Activated B cell treated with CpG ODN at 0.5 μM for 24 hours (primary cell): ENCODE measurements at regions of chr14 and their contacts with region 1.

Region 1: GRCh38 chr14:35404449-35405303 is at the start of gene NFKBIA:
- DNase-seq: peak; percentile 98
- ATAC-seq: peak; percentile 69
- H3K4me3 Mint-ChIP-seq: peak within 1 kb of the TSS; percentile 96
- H3K27ac Mint-ChIP-seq: peak within 1 kb of the TSS; percentile 96
- H3K4me1 Mint-ChIP-seq: peaks cover 54% of the 10 kb centered on the region
- H3K27me3 Mint-ChIP-seq: no peaks in the 10 kb centered on the region
- CTCF ChIP-seq: no peak
- total RNA-seq, gene NFKBIA: 480 and 515 TPM in 2 replicates

Region 2: DNA sequence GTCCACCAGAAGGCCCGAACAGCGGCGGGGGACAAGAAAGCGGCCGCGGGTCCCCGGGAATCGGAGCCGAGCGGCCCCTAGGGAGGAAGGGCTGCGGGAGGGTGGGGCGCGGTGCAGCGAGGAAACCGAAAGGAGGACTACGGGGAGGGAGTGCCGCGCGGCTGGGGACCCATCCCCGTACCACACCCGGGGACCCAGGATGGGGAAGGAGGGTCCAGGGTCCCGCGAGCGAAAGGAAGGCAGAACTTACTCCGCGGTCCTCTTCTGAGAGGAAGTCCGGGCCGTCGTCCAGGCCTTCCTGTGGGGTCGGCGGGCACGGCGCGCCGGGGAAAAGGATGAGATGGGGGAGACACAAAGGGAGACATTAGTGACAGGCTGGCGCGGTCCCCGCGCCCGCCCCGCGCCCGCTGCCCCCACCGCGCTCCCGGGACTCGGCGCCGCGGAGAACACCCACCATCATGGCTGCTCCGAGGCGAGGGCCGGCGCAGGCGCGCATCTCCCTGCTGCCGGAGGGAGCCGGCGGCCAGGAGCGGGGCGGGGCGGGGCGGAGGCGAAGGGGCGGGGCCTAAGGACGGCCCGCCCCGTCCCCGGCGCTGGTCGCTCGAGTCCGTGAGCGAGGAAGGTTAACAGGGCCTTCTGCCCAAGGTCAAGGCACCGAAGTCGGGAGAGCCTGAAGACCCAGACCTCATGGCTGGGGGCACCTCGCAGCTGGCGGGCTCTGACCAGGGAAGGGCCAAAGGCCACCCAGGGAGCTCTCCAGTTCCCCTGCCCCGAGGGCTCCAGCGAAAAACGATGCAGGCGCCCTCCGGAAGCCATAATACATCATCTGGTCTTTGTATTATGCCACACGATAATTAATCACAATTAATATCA is 774.8 kb before region 1 on chr14 and contains the start of gene SNX6:
- CTCF ChIA-PET with region 1: no interaction called
- POLR2A ChIA-PET with region 1: interaction called, 5 read pairs
- intact Hi-C with region 1: loop called (anchors 2 kb)
- DNase-seq: peak; percentile 77
- ATAC-seq: peak; percentile 98
- H3K4me3 Mint-ChIP-seq: peak within 1 kb of the TSS; percentile 97
- H3K27ac Mint-ChIP-seq: peak within 1 kb of the TSS; percentile 93
- H3K4me1 Mint-ChIP-seq: peaks cover 10% of the 10 kb centered on the region
- H3K27me3 Mint-ChIP-seq: peaks cover 3% of the 10 kb centered on the region
- CTCF ChIP-seq: no peak
- total RNA-seq, gene SNX6: 56.0 and 61.0 TPM in 2 replicates

Region 3: DNA sequence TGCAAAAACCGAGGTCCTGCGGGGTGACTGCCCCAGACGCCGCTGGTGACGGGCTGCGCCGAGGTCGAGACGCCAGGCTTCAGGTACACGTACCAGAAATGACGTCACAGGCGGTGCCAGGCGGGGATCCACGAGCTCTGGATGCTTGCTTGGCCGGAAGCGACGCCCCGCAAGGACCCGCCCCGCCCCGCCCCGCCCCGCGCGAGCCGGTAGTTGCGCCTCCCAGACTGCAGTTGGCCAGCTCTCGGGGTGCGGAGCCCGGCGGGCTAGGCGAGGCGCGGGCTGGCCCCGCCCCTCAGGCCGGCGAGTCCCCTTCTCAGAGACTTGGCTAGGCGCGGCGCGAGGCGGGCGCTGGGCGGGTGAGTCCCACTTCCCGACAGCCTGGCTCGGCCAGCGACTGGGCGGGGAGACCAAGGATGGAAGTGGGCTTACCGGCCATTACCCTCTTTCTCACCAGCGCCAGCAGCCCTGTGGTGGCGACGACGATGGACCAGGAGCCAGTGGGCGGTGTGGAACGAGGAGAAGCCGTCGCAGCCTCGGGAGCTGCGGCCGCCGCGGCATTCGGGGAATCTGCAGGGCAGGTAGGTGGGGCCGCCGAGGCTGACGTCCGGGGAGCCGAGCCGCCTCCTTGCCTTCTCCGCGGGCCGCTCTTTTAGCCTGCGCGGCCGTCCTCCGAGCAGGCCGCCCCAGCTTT is 358.5 kb before region 1 on chr14 and contains the start of gene FAM177A1:
- CTCF ChIA-PET with region 1: no interaction called
- POLR2A ChIA-PET with region 1: interaction called, 37 read pairs
- intact Hi-C with region 1: loop called (anchors 1 kb)
- DNase-seq: peak; percentile 93
- ATAC-seq: peak; percentile 94
- H3K4me3 Mint-ChIP-seq: peak within 1 kb of the TSS; percentile 96
- H3K27ac Mint-ChIP-seq: peak within 1 kb of the TSS; percentile 97
- H3K4me1 Mint-ChIP-seq: peaks cover 28% of the 10 kb centered on the region
- H3K27me3 Mint-ChIP-seq: no peaks in the 10 kb centered on the region
- CTCF ChIP-seq: no peak
- total RNA-seq, gene FAM177A1: 23.5 and 27.4 TPM in 2 replicates

Region 4: DNA sequence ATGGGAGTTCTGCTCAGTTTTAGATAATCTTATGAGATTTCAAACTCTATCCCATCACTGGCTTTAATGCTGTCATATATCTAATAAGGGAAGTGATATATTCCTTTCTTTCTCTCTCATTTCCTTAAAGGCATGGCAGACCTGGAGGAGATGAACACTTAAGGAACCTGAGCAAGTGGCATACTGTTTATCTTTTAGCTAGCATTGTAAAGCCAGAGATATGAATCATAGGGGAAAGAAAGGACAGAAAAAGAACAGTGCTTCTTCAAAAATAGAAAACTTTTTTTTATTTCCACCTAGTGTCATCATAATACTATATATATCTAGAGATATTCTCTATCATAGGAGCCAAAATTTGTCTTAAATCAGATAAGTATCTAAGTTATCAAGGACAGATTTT is 180.7 kb before region 1 on chr14:
- CTCF ChIA-PET with region 1: interaction called, 47 read pairs
- POLR2A ChIA-PET with region 1: interaction called, 24 read pairs
- intact Hi-C with region 1: loop called (anchors 1 kb)
- DNase-seq: no peak
- ATAC-seq: no peak
- H3K4me3 Mint-ChIP-seq: no peak overlapping the region
- H3K27ac Mint-ChIP-seq: no peak overlapping the region
- H3K4me1 Mint-ChIP-seq: no peaks in the 10 kb centered on the region
- H3K27me3 Mint-ChIP-seq: no peaks in the 10 kb centered on the region
- CTCF ChIP-seq: no peak

Region 5: GRCh38 chr14:35292051-35292769 is 112.5 kb before region 1 on chr14 and contains the start of gene PSMA6:
- CTCF ChIA-PET with region 1: interaction called, 7 read pairs
- POLR2A ChIA-PET with region 1: interaction called, 211 read pairs
- intact Hi-C with region 1: loop called (anchors 1 kb)
- DNase-seq: peak; percentile 93
- ATAC-seq: peak; percentile 97
- H3K4me3 Mint-ChIP-seq: peak within 1 kb of the TSS; percentile 99
- H3K27ac Mint-ChIP-seq: peak within 1 kb of the TSS; percentile 96
- H3K4me1 Mint-ChIP-seq: peaks cover 61% of the 10 kb centered on the region
- H3K27me3 Mint-ChIP-seq: no peaks in the 10 kb centered on the region
- CTCF ChIP-seq: no peak
- total RNA-seq, gene PSMA6: 163 and 180 TPM in 2 replicates

Region 6: GRCh38 chr14:35365130-35366055 is 39.3 kb before region 1 on chr14:
- CTCF ChIA-PET with region 1: interaction called, 4 read pairs
- POLR2A ChIA-PET with region 1: interaction called, 191 read pairs
- intact Hi-C with region 1: loop called (anchors 1 kb)
- DNase-seq: no peak
- ATAC-seq: peak; percentile 82
- H3K4me3 Mint-ChIP-seq: peak overlapping the region; percentile 8
- H3K27ac Mint-ChIP-seq: peak overlapping the region; percentile 59
- H3K4me1 Mint-ChIP-seq: peaks cover 41% of the 10 kb centered on the region
- H3K27me3 Mint-ChIP-seq: no peaks in the 10 kb centered on the region
- CTCF ChIP-seq: no peak

Region 7: DNA sequence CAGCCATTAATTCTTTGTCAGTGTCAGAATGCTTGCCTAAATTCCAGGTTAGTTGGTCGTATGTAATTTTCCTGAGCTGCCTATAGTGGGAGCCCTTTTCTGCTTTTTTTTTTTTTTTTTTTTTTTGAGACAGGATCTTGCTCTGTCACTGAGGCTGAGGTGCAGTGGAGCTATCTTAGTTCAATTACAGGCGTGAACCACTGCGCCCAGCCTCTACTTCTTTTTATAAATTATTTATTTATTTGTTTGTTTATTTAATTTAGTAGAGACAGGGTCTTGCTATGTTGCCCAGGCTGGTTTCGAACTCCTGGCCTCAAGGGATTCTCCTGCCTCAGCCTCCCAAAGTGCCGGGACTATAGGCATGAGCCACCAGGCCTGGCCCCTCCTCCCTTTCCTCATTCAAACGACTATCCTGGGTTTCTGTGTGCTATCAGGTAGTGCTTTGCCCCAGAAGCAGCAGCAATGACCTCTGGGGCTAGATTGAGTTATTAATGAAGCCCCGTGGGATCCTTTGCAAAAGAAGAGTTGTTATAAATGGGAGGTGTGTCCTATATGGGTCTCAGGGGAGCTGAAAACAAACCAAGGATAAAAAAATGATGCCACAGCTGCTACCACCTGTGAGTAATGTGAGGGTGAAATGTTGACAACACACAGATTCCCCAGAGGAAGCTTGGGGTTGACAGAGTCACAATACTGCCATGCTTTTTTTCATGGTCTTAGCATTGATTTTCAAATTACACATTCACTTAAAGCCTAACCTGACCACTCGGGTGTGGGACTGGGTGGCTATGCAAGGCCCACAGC is 34.4 kb after region 1 on chr14:
- CTCF ChIA-PET with region 1: no interaction called
- POLR2A ChIA-PET with region 1: interaction called, 13 read pairs
- intact Hi-C with region 1: no loop called
- DNase-seq: no peak
- ATAC-seq: peak; percentile 93
- H3K4me3 Mint-ChIP-seq: no peak overlapping the region
- H3K27ac Mint-ChIP-seq: no peak overlapping the region
- H3K4me1 Mint-ChIP-seq: peaks cover 10% of the 10 kb centered on the region
- H3K27me3 Mint-ChIP-seq: peaks cover 3% of the 10 kb centered on the region
- CTCF ChIP-seq: no peak

Region 8: DNA sequence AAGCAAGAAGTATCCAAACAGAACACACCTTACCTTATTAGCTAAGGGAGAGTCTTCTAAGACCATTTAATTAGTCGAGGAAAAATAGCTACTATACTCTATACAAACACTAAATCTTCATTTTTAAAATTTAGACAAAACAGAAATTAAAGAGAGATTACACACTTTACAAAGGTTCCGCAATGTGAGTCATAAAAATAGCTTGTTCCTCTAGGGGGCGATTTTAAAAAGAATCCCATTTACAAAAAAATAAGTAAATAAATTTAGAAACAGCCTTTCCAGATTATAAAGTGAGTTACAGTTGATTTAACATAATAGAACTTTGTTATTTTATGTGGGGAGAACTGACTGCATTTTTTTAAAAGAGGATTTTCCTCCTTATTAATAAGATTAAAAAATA is 1458.6 kb after region 1 on chr14:
- CTCF ChIA-PET with region 1: no interaction called
- POLR2A ChIA-PET with region 1: no interaction called
- intact Hi-C with region 1: no loop called
- DNase-seq: no peak
- ATAC-seq: no peak
- H3K4me3 Mint-ChIP-seq: no peak overlapping the region
- H3K27ac Mint-ChIP-seq: no peak overlapping the region
- H3K4me1 Mint-ChIP-seq: no peaks in the 10 kb centered on the region
- H3K27me3 Mint-ChIP-seq: no peaks in the 10 kb centered on the region
- CTCF ChIP-seq: no peak